Tibial artery (tissue), 4 donors: ENCODE measurements at regions of chr6 and their contacts with region 1.

Region 1: GRCh38 chr6:15264902-15265761 is 19.3 kb downstream of the JARID2 start:
- DNase-seq: no peak
- H3K4me3 ChIP-seq: no peak overlapping the region
- H3K27ac ChIP-seq: no peak overlapping the region
- H3K4me1 ChIP-seq: peaks cover 0 to 54% (median 26%) of the 10 kb centered on the region in 4 donors
- H3K27me3 ChIP-seq: no peaks in the 10 kb centered on the region
- CTCF ChIP-seq: no peak

Region 2: DNA sequence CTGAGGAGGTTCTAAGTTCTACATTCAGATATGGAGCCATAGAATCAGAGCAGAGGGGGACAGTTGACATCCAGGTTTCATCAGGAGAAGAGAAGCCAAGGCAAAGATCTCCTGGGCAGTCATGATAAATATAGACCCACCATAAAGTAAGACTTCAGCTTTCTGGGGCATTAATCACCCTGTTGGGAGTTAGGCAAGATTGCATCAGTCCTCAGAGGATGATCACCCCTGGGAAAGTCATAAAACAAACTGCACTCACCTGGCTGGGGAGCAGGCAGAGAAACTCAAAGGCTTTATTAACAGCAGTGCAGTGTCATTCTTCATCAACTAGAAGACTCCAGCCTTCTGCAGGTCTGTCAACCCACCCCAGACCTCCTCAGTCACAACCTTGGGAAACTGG is 320.5 kb before region 1 on chr6:
- intact Hi-C with region 1: no loop called
- DNase-seq: no peak
- H3K4me3 ChIP-seq: no peak overlapping the region
- H3K27ac ChIP-seq: no peak overlapping the region
- H3K4me1 ChIP-seq: no peaks in the 10 kb centered on the region
- H3K27me3 ChIP-seq: peaks cover 0 to 4% of the 10 kb centered on the region in 2 donors
- CTCF ChIP-seq: no peak

Region 3: DNA sequence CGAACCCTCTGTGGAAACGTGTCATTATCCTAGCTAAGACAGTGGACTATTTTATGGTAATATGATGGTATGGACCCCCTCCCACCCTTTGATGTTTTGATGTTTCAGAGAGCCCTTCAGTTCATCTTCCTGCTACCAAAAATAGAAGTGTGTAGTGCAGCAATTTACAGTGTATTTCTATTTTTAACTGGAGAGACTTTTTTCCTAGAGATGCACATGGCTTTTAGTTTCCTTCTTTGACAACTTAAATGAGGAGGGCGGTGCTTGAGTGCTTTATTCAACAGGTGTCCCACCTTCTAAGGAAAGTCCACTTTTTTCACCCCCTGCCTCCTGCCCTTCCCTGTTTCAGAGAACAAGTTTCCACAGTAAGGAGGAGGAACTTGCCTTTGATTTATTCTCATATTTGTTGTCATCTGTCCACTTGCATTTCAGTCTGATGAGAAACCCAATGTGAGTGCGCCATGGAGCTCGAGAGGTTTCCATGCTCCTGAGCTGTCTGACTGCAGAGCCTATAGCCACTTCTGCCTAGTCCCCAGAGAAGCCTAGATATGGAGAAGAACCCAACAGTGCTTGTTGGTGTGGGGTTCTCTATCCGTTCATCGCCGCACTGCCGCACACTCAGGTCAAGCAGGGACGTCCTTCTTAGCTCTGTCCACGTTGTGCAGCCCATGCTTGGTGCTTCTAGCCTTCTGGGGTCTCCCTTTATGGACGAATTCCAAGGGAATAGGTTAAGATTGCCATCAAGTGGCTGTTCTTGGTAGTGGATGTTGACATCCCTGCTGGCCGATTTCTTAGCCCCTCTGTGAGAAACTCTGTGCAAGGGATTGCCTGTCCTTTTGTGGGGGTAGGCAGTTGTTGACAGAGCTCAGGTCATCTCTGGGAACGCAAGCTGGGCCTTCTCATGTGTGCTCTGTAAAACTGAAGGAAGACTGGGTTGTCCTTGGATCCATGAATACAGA is 124.9 kb after region 1 on chr6:
- intact Hi-C with region 1: loop called (anchors 10 kb)
- DNase-seq: no peak
- H3K4me3 ChIP-seq: no peak overlapping the region
- H3K27ac ChIP-seq: no peak overlapping the region
- H3K4me1 ChIP-seq: peaks cover 0 to 37% (median 27%) of the 10 kb centered on the region in 4 donors
- H3K27me3 ChIP-seq: no peaks in the 10 kb centered on the region
- CTCF ChIP-seq: peak; percentile 44 to 47